Activated CD4-positive, alpha-beta memory T cell treated with anti-CD3 and anti-CD28 coated beads for 36 hours (primary cell): ENCODE measurements at regions of chr9 and their contacts with region 1.

Region 1: GRCh38 chr9:89318123-89319014 is at the start of gene SECISBP2:
- DNase-seq: peak; percentile 96
- H3K4me3 Mint-ChIP-seq: peak within 1 kb of the TSS; percentile 85
- H3K27ac Mint-ChIP-seq: peak within 1 kb of the TSS; percentile 97
- H3K4me1 Mint-ChIP-seq: peaks cover 75% of the 10 kb centered on the region
- H3K27me3 Mint-ChIP-seq: no peaks in the 10 kb centered on the region
- total RNA-seq, gene SECISBP2: 34.0 to 34.7 TPM

Region 2: DNA sequence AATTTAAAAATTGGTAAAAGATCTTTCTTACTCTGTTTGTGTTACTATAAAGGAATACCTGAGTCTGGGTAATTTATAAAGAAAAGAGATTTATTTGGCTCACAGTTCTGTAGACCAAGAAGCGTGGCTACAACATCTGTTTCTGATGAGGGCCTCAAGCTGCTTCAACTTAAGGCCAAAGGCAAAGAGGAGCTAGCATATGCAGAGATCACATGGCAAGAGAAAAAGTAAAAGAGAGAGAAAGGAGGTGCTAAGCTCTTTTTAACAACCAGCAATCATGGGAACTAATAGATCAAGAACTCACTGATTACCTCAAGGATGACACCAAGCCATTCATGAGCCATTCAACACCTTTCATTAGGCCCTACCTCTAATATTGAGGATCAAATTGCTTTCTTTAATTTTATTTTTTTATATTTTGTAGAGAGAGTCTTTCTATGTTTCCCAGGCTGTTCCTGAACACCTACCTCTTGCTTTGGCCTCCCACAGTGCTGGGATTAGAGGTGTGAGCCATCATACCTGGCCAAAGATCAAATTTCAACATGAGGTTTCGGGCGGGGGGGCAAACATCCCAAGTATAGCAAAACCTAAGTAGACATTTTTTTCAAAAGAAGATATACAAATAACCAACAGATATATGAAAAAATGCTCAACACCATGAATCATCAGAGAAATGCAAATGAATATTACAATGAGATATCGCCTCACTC is 123.8 kb before region 1 on chr9:
- CTCF ChIA-PET with region 1: no interaction called
- POLR2A ChIA-PET with region 1: no interaction called
- intact Hi-C with region 1: no loop called
- DNase-seq: no peak
- H3K4me3 Mint-ChIP-seq: no peak overlapping the region
- H3K27ac Mint-ChIP-seq: no peak overlapping the region
- H3K4me1 Mint-ChIP-seq: no peaks in the 10 kb centered on the region
- H3K27me3 Mint-ChIP-seq: peaks cover 10% of the 10 kb centered on the region

Region 3: GRCh38 chr9:89213396-89213880 is 104.9 kb before region 1 on chr9:
- CTCF ChIA-PET with region 1: no interaction called
- POLR2A ChIA-PET with region 1: no interaction called
- intact Hi-C with region 1: no loop called
- DNase-seq: no peak
- H3K4me3 Mint-ChIP-seq: no peak overlapping the region
- H3K27ac Mint-ChIP-seq: no peak overlapping the region
- H3K4me1 Mint-ChIP-seq: no peaks in the 10 kb centered on the region
- H3K27me3 Mint-ChIP-seq: peaks cover 6% of the 10 kb centered on the region

Region 4: DNA sequence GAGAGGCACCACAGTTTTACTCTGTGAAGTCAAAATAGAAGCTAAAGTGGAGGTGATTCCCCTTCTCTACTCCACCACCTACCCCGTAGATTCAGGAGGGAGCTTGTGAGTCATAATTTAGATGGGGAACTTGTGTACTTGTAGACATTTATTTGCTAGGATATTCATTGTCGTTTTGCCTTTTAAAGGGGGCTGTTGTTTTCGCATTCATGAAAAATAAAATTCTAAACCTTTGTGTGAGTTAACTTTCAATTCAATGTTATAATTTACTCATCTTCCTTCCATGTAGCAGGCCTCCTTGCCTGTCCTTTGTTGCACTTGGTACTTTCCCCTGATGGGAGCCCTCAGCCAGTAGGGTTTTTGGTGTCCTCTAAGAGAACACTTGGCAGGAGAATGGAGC is 22.0 kb after region 1 on chr9:
- CTCF ChIA-PET with region 1: no interaction called
- POLR2A ChIA-PET with region 1: no interaction called
- intact Hi-C with region 1: loop called (anchors 1 kb)
- DNase-seq: no peak
- H3K4me3 Mint-ChIP-seq: no peak overlapping the region
- H3K27ac Mint-ChIP-seq: peak overlapping the region; percentile 76
- H3K4me1 Mint-ChIP-seq: peaks cover 70% of the 10 kb centered on the region
- H3K27me3 Mint-ChIP-seq: no peaks in the 10 kb centered on the region

Region 5: DNA sequence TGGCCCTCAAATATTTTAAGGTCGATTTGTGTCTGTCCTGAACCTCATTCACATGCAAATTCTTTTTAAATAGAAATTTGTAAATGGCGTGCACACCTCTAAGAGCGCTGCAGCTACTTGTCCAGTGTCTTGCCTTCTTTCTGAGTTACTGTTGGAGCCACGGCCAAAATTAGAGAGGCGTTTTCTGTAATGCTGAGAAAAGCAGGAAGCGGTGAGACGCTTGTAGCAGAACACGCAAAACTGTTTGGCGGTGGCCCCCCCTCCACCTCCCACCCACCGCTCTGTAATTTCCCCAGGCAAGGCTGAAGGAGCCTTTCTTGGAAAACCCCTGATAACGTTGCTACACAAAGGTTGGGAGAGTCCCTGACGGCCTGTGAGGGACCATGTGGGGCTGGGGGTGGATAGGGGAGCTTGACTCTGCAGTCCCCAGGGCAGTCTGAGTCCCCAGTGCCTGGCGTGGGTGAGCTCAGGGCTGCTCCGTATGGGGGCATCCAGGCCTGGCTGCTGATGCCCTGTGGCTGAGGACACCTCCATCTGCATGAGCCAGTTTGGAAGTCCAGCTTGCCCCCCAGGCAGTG is 382.9 kb after region 1 on chr9:
- CTCF ChIA-PET with region 1: no interaction called
- POLR2A ChIA-PET with region 1: no interaction called
- intact Hi-C with region 1: loop called (anchors 2 kb)
- DNase-seq: peak; percentile 93
- H3K4me3 Mint-ChIP-seq: peak overlapping the region; percentile 52
- H3K27ac Mint-ChIP-seq: peak overlapping the region; percentile 34
- H3K4me1 Mint-ChIP-seq: peaks cover 44% of the 10 kb centered on the region
- H3K27me3 Mint-ChIP-seq: no peaks in the 10 kb centered on the region